K562 (cell line): ENCODE measurements at regions of chr1 and their contacts with region 1.

Region 1: GRCh38 chr1:112911506-112911905 is 44.5 kb downstream of the SLC16A1 start:
- DNase-seq: no peak
- ATAC-seq: no peak
- H3K4me3 ChIP-seq: no peak overlapping the region
- H3K27ac ChIP-seq: no peak overlapping the region
- H3K4me1 ChIP-seq: 0 out of 5 replicates have a peak, but pooled peaks cover 0 to 3% of the 10 kb centered on the region in 2 experiments
- H3K27me3 ChIP-seq: no peaks in the 10 kb centered on the region
- CTCF ChIP-seq: no peak
- EP300 ChIP-seq: no peak
- POLR2A ChIP-seq: no peak
- RAD21 ChIP-seq: no peak

Region 2: GRCh38 chr1:112540226-112540794 is 371.2 kb before region 1 on chr1:
- CTCF ChIA-PET with region 1: no interaction called
- POLR2A ChIA-PET with region 1: no interaction called
- in situ Hi-C with region 1: no loop called
- intact Hi-C with region 1: no loop called
- DNase-seq: no peak
- ATAC-seq: no peak
- H3K4me3 ChIP-seq: no peak overlapping the region
- H3K27ac ChIP-seq: no peak overlapping the region
- H3K4me1 ChIP-seq: no peaks in the 10 kb centered on the region
- H3K27me3 ChIP-seq: no peaks in the 10 kb centered on the region
- CTCF ChIP-seq: no peak
- EP300 ChIP-seq: no peak
- POLR2A ChIP-seq: no peak
- RAD21 ChIP-seq: no peak

Region 3: DNA sequence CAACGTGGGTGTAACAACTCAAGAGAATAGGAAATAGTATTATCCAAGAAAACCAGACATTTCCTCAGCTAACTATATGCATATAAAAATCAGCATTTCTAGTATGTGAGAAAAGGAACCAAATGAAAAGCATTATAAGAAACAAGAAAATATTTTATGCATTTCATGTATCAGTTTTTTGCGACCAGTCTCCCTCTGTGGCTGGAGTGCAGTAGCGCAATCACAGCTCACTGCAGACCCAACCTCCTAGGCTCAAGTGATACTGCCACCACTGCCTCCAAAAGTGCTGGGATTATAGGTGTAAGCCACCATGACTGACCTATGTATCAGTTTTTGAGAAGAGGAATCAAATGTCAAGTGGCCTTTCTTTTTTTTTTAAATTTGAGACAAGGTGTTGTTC is 13.5 kb after region 1 on chr1:
- CTCF ChIA-PET with region 1: no interaction called
- POLR2A ChIA-PET with region 1: interaction called, 11 read pairs
- in situ Hi-C with region 1: no loop called
- intact Hi-C with region 1: no loop called
- DNase-seq: no peak
- ATAC-seq: peak; percentile 64
- H3K4me3 ChIP-seq: no peak overlapping the region
- H3K27ac ChIP-seq: no peak overlapping the region
- H3K4me1 ChIP-seq: peaks cover 0 to 7% of the 10 kb centered on the region in 2 experiments; a peak in 1 of 5 replicates
- H3K27me3 ChIP-seq: no peaks in the 10 kb centered on the region
- CTCF ChIP-seq: peak in 2 of 3 experiments; percentile 22 to 23; a peak in 1 of 6 replicates
- EP300 ChIP-seq: no peak
- POLR2A ChIP-seq: no peak
- RAD21 ChIP-seq: no peak